CD4-positive, alpha-beta T cell (primary cell): ENCODE measurements at regions of chr6 and their contacts with region 1.

Region 1: DNA sequence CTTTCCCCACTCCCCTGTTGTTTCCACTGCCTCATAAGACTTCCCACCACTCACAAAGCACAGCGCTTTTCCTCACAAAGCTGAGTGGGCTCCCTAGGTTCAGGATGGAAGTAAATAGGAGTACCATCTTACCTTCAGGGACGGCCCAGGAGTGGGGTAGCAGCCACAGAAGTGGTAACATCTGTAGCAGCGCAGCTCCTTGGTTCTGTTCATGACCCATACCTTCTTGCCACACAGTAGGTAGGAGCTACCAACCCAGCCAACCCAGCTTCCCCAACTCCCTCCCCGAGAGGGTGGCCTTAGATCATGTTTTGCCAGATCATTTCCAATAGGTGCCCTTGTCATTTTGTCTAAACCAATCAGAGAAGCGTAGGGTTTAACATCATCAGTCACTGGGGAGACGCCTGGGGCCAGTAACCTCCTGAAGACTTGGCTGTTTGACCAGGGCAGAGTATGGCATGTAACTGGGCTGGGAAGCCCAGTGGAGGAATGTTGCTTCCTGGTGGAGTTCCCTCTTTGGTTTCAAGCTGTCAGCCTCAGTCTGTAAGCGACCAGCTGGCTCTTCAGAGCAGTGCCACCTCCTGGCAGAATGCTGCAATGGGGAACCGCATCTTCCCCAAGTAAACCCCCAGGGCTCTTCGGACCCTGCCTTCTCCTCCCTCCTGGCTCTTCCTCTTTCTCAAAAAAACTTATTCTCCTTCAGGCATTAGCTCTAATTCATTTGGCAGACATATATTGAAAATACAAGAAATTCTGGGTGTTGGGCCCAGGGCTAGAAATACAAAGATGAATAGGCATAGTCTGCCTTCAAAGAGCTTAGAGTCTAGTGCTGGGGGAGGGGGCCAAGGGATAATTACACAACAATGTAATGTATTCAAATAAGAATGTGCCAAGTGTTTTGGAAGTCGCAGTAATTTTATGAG is at the start of gene HLA-DMA:
- DNase-seq: peak; percentile 57 to 92 (median 70)
- ATAC-seq: peak; percentile 98
- H3K4me3 ChIP-seq: peak within 1 kb of the TSS; percentile 49
- H3K4me3 Mint-ChIP-seq: peak within 1 kb of the TSS; percentile 71
- H3K27ac ChIP-seq: peak within 1 kb of the TSS; percentile 5 to 44
- H3K27ac Mint-ChIP-seq: peak within 1 kb of the TSS; percentile 82
- H3K4me1 ChIP-seq: peaks cover 26% of the 10 kb centered on the region
- H3K4me1 Mint-ChIP-seq: peaks cover 45% of the 10 kb centered on the region
- H3K27me3 ChIP-seq: no peaks in the 10 kb centered on the region
- H3K27me3 Mint-ChIP-seq: no peaks in the 10 kb centered on the region
- CTCF ChIP-seq: peak; percentile 86
- total RNA-seq, gene HLA-DMA: 14.4 to 16.5 TPM

Region 2: DNA sequence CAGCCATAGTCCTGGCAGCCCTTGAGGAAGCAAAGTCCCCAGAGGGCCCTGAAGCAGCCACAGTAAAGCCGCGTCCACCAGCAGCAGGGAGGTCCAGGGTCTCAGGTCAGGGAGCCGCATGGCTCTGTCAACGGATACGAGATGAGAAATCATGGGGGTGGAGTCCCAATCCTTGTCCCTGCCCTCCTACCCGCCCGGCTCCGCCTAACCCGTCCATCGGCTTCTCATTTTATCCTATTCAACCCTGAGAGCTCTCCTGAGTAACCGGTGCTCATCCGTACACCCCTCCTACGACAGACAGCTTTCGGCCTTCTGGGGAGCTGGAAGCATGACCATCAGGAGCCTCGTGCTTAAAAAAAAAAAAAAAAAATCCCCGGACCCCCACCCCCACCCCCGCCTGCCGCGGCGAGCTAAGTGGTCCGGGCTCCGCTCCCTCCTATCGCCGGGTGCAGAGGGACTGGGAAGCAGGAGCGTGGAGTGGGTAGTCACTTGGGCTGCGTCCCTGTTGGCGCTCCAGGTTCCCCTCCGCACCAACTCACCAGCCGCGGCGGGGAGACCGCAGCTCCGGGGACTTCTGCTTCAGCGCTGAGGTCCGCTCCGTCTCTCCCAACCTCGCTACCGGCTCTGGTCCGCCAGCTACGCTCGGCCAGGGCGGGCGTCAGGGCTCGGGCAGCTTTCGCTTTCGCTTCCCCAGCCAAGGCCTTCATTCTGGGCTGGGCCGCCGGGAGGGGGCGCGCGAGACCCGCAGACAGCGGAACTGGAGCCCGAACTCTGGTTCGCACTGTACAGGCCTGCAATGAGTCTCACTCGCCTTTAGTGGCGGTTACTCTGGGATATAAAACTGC is 114.7 kb before region 1 on chr6 and contains the start of gene TAP2:
- CTCF ChIA-PET with region 1: interaction called, 21 read pairs
- POLR2A ChIA-PET with region 1: interaction called, 4 read pairs
- intact Hi-C with region 1: no loop called
- DNase-seq: peak; percentile 93 to 99 (median 98)
- ATAC-seq: peak; percentile 86
- H3K4me3 ChIP-seq: peak within 1 kb of the TSS; percentile 77
- H3K4me3 Mint-ChIP-seq: peak within 1 kb of the TSS; percentile 97
- H3K27ac ChIP-seq: peak within 1 kb of the TSS; percentile 76 to 87
- H3K27ac Mint-ChIP-seq: peak within 1 kb of the TSS; percentile 99
- H3K4me1 ChIP-seq: peaks cover 67% of the 10 kb centered on the region
- H3K4me1 Mint-ChIP-seq: peaks cover 94% of the 10 kb centered on the region
- H3K27me3 ChIP-seq: no peaks in the 10 kb centered on the region
- H3K27me3 Mint-ChIP-seq: no peaks in the 10 kb centered on the region
- CTCF ChIP-seq: peak; percentile 93
- total RNA-seq, gene TAP2: 165 to 171 TPM

Region 3: DNA sequence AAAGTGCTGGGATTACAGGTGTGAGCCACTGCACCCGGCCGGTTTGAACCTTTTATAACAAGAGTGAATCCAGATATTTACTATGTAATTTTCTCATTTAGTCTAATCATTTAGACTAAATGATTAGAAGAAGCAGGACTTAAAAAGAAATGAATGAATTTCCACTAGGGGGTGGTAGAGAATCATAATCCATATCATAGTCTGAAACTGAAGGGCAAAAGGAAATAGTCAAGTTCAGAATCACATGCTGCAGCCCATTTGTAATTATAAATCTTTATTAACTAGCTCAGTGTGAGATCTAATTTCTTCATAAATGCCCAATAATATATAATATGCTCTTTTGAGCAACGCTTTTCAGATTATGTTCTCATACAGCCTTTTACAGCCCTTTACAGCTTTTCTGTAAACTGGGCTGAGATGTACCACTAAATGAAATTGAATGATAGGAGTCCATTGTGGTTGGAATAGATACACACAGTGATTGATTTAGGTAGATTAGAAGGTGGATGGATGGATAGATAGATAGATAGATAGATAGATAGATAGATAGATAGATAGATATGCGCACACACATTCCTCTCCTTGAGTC is 67.3 kb before region 1 on chr6:
- CTCF ChIA-PET with region 1: interaction called, 15 read pairs
- POLR2A ChIA-PET with region 1: interaction called, 4 read pairs
- intact Hi-C with region 1: loop called (anchors 1 to 2 kb)
- DNase-seq: peak in 3 of 14 experiments; percentile 83 to 85 (median 83)
- ATAC-seq: peak; percentile 65
- H3K4me3 ChIP-seq: no peak overlapping the region
- H3K4me3 Mint-ChIP-seq: no peak overlapping the region
- H3K27ac ChIP-seq: no peak overlapping the region
- H3K27ac Mint-ChIP-seq: no peak overlapping the region
- H3K4me1 ChIP-seq: no peaks in the 10 kb centered on the region
- H3K4me1 Mint-ChIP-seq: no peaks in the 10 kb centered on the region
- H3K27me3 ChIP-seq: no peaks in the 10 kb centered on the region
- H3K27me3 Mint-ChIP-seq: no peaks in the 10 kb centered on the region
- CTCF ChIP-seq: peak; percentile 73

Region 4: DNA sequence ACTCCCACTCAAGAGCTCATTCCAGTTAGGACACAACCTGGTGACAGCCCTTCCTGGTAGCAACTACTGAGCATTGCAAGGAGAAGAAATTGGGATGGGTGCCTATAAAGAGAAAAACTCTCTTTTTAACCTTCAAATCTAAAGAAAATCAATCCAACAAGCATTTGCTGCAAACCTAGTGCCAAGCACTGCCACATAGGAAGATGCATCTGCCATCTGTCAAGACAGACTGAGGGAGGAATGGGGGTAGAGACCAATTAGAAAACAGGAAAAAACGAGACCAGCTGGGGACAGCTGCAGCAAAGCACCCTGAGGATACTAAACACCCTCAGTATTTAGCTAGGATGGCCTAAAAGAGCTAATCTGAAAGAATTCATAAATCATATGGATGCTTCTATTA is 40.1 kb before region 1 on chr6:
- CTCF ChIA-PET with region 1: no interaction called
- POLR2A ChIA-PET with region 1: no interaction called
- intact Hi-C with region 1: no loop called
- DNase-seq: no peak
- ATAC-seq: no peak
- H3K4me3 ChIP-seq: no peak overlapping the region
- H3K4me3 Mint-ChIP-seq: no peak overlapping the region
- H3K27ac ChIP-seq: no peak overlapping the region
- H3K27ac Mint-ChIP-seq: no peak overlapping the region
- H3K4me1 ChIP-seq: no peaks in the 10 kb centered on the region
- H3K4me1 Mint-ChIP-seq: no peaks in the 10 kb centered on the region
- H3K27me3 ChIP-seq: peaks cover 0 to 5% of the 10 kb centered on the region in 2 experiments
- H3K27me3 Mint-ChIP-seq: peaks cover 29% of the 10 kb centered on the region
- CTCF ChIP-seq: no peak

Region 5: GRCh38 chr6:32933636-32934085 is 19.4 kb before region 1 on chr6:
- CTCF ChIA-PET with region 1: interaction called, 65 read pairs
- POLR2A ChIA-PET with region 1: interaction called, 19 read pairs
- intact Hi-C with region 1: loop called (anchors 1 kb)
- DNase-seq: peak; percentile 61 to 88 (median 74)
- ATAC-seq: peak; percentile 68
- H3K4me3 ChIP-seq: no peak overlapping the region
- H3K4me3 Mint-ChIP-seq: no peak overlapping the region
- H3K27ac ChIP-seq: no peak overlapping the region
- H3K27ac Mint-ChIP-seq: no peak overlapping the region
- H3K4me1 ChIP-seq: no peaks in the 10 kb centered on the region
- H3K4me1 Mint-ChIP-seq: peaks cover 6% of the 10 kb centered on the region
- H3K27me3 ChIP-seq: no peaks in the 10 kb centered on the region
- H3K27me3 Mint-ChIP-seq: no peaks in the 10 kb centered on the region
- CTCF ChIP-seq: peak; percentile 84

Region 6: GRCh38 chr6:32964776-32965175 is 11.7 kb after region 1 on chr6:
- CTCF ChIA-PET with region 1: interaction called, 177 read pairs
- POLR2A ChIA-PET with region 1: interaction called, 323 read pairs
- intact Hi-C with region 1: loop called (anchors 1 kb)
- DNase-seq: no peak
- ATAC-seq: no peak
- H3K4me3 ChIP-seq: no peak overlapping the region
- H3K4me3 Mint-ChIP-seq: peak overlapping the region; percentile 26
- H3K27ac ChIP-seq: no peak overlapping the region
- H3K27ac Mint-ChIP-seq: peak overlapping the region; percentile 100
- H3K4me1 ChIP-seq: peaks cover 27% of the 10 kb centered on the region
- H3K4me1 Mint-ChIP-seq: peaks cover 59% of the 10 kb centered on the region
- H3K27me3 ChIP-seq: no peaks in the 10 kb centered on the region
- H3K27me3 Mint-ChIP-seq: no peaks in the 10 kb centered on the region
- CTCF ChIP-seq: no peak